BJ (cell line): ENCODE measurements at regions of chr18 and their contacts with region 1.

Region 1: DNA sequence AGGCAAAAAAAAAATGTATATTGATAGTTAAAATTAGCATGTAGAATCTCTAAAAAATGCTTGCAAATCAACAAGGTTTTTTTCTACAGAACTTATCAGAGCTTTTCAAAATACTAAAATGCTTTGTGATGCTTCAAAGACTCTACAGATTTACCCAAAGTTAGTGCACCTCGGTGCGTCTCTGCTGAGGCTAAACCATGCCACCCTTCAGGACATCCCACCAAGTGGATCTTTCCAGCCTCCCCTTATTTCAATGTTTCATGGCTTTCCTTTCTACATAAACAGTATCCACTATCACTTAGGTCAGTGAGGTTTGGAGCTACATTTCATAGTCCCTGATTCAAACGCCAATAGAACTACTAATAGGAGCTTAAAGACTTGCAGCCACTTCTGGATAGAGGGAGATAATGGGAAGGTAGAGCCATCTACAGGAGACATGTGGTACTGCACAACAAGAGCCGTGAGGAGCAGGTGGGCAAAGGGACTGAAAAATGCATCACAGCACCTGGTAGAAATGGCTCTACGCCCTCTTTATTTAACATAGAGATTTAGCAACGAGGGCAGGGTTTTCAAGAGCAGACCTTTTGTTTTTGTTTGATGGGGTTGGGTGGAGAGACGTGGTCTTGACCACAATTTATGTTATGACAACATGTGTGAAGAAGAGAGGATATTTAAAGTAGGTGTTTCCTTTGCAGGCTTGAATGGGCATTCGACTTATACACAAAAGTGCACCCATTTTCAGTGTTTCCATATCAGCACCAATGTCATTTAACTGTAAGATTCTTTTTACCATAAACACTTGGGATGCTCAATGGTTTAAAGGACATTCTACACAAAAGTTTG is 56.1 kb upstream of the SLC35G4 start:
- DNase-seq: no peak
- H3K4me3 ChIP-seq: no peak overlapping the region
- H3K27me3 ChIP-seq: no peaks in the 10 kb centered on the region; the same call in 1 of the 2 replicates
- CTCF ChIP-seq: peak; percentile 92

Region 2: GRCh38 chr18:10851824-10852319 is 701.4 kb before region 1 on chr18:
- CTCF ChIA-PET with region 1: interaction called, 26 read pairs
- POLR2A ChIA-PET with region 1: no interaction called
- DNase-seq: no peak
- H3K4me3 ChIP-seq: no peak overlapping the region
- H3K27me3 ChIP-seq: peaks cover 10% of the 10 kb centered on the region; the same call in 1 of the 2 replicates
- CTCF ChIP-seq: peak; percentile 68

Region 3: GRCh38 chr18:11310476-11311086 is 242.7 kb before region 1 on chr18:
- CTCF ChIA-PET with region 1: interaction called, 62 read pairs
- POLR2A ChIA-PET with region 1: no interaction called
- DNase-seq: no peak
- H3K4me3 ChIP-seq: no peak overlapping the region
- H3K27me3 ChIP-seq: no peaks in the 10 kb centered on the region
- CTCF ChIP-seq: peak; percentile 81

Region 4: DNA sequence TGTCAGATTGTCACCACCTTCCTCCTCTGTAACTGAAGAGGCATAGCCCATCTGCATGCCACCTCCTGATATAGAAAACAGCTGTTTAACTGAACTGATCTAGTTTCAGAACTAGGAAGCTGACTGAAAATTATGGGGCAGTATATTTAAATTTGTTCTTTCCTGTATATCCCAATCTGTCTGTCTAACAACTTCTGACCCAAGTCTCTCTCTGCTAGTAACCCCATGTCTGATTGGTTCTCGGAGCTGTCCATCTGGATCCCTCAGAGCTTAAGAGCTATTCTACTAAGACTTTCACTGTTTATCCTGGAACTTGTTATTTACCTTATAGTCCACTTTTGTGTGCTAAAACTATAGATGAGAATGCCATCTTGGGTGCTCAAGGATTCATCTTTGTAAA is 12.1 kb before region 1 on chr18:
- CTCF ChIA-PET with region 1: interaction called, 15 read pairs
- POLR2A ChIA-PET with region 1: no interaction called
- DNase-seq: no peak
- H3K4me3 ChIP-seq: no peak overlapping the region
- H3K27me3 ChIP-seq: no peaks in the 10 kb centered on the region
- CTCF ChIP-seq: no peak

Region 5: GRCh38 chr18:11570769-11571168 is 17.4 kb after region 1 on chr18:
- CTCF ChIA-PET with region 1: interaction called, 15 read pairs
- POLR2A ChIA-PET with region 1: no interaction called
- DNase-seq: no peak
- H3K4me3 ChIP-seq: no peak overlapping the region
- H3K27me3 ChIP-seq: no peaks in the 10 kb centered on the region
- CTCF ChIP-seq: peak; percentile 17; the same call in 1 of the 2 replicates

Region 6: GRCh38 chr18:11688989-11689668 is 135.8 kb after region 1 on chr18 and contains the start of gene GNAL:
- CTCF ChIA-PET with region 1: no interaction called
- POLR2A ChIA-PET with region 1: no interaction called
- DNase-seq: peak; percentile 0
- H3K4me3 ChIP-seq: peak within 1 kb of the TSS; percentile 40
- H3K27me3 ChIP-seq: no peaks in the 10 kb centered on the region; the same call in 1 of the 2 replicates
- CTCF ChIP-seq: no peak
- polyA plus RNA-seq, gene GNAL: 0.21 and 0.43 TPM in 2 replicates